Breast epithelium (tissue), 4 donors: ENCODE measurements at regions of chr13 and their contacts with region 1.

Region 1: GRCh38 chr13:111944171-111944583 is 122.8 kb upstream of the SOX1 start:
- DNase-seq: no peak
- H3K4me3 ChIP-seq: no peak overlapping the region
- H3K27ac ChIP-seq: no peak overlapping the region
- H3K4me1 ChIP-seq: no peaks in the 10 kb centered on the region
- H3K27me3 ChIP-seq: peaks cover 0 to 20% of the 10 kb centered on the region in 2 donors
- CTCF ChIP-seq: no peak
- POLR2A ChIP-seq: no peak

Region 2: DNA sequence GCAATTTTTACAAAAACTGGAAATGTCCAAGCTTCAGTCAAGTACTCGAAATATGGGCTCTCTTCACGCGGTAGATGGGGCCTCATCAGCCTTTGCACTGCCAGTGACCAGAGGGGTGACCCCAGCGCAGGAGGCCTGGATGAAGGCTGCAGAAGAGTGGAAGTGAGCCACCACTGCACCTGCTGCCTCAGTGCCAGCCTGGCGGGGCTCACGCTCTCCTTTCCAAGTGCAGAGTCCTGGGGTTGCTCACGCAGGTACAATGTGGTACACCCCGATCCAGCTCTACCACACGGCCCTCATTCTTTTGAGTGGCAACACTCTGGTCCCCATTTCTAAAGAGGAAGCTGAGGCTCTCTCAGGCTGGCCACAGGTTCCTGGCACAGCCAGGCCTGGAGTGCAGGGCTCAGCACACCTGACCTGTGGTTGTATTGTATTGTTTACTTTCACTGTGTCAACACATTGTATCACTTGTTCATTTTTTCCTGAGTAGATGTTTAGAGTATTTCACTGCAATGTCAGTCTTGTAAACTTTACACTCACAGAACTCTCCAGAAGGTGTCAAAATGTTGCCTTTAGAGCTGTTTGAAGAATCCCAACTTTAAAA is 25.5 kb after region 1 on chr13:
- intact Hi-C with region 1: loop called (anchors 1 kb)
- DNase-seq: no peak
- H3K4me3 ChIP-seq: no peak overlapping the region
- H3K27ac ChIP-seq: no peak overlapping the region
- H3K4me1 ChIP-seq: no peaks in the 10 kb centered on the region
- H3K27me3 ChIP-seq: peaks cover 0 to 37% of the 10 kb centered on the region in 2 donors
- CTCF ChIP-seq: no peak
- POLR2A ChIP-seq: no peak

Region 3: GRCh38 chr13:112606109-112607001 is 662.2 kb after region 1 on chr13:
- intact Hi-C with region 1: no loop called
- DNase-seq: peak; percentile 73 to 83
- H3K4me3 ChIP-seq: peak overlapping the region; percentile 45 to 65 (median 54)
- H3K27ac ChIP-seq: peak overlapping the region; percentile 16 to 21
- H3K4me1 ChIP-seq: no peaks in the 10 kb centered on the region
- H3K27me3 ChIP-seq: no peaks in the 10 kb centered on the region
- CTCF ChIP-seq: peak; percentile 80 to 95 (median 87)
- POLR2A ChIP-seq: no peak